SK-N-SH (cell line): ENCODE measurements at regions of chr2 and their contacts with region 1.

Region 1: GRCh38 chr2:29923110-29923721 is 1.8 kb upstream of the ALK start:
- DNase-seq: peak; percentile 71
- H3K4me3 ChIP-seq: no peak overlapping the region; a peak in 1 of 4 replicates
- H3K27ac ChIP-seq: no peak overlapping the region; a peak in 1 of 4 replicates
- H3K4me1 ChIP-seq: peaks cover 0 to 11% of the 10 kb centered on the region in 2 experiments; a peak in 2 of 4 replicates
- H3K27me3 ChIP-seq: peaks cover 38% of the 10 kb centered on the region
- CTCF ChIP-seq: peak; percentile 99
- EP300 ChIP-seq: 0 out of 4 replicates have a peak, but pooled peaks of 1 of the 2 experiments have one; percentile 10
- RAD21 ChIP-seq: peak; percentile 99

Region 2: GRCh38 chr2:28958689-28959088 is 964.5 kb before region 1 on chr2:
- CTCF ChIA-PET with region 1: interaction called, 10 read pairs
- POLR2A ChIA-PET with region 1: interaction called, 6 read pairs
- DNase-seq: peak; percentile 87
- H3K4me3 ChIP-seq: no peak overlapping the region; a peak in 1 of 4 replicates
- H3K27ac ChIP-seq: peak overlapping the region in 1 of 2 experiments; percentile 26; a peak in 1 of 4 replicates
- H3K4me1 ChIP-seq: peaks cover 0 to 10% of the 10 kb centered on the region in 2 experiments; a peak in 1 of 4 replicates
- H3K27me3 ChIP-seq: no peaks in the 10 kb centered on the region
- CTCF ChIP-seq: peak; percentile 79
- EP300 ChIP-seq: 0 out of 4 replicates have a peak, but pooled peaks of 1 of the 2 experiments have one; percentile 18
- RAD21 ChIP-seq: peak; percentile 99

Region 3: DNA sequence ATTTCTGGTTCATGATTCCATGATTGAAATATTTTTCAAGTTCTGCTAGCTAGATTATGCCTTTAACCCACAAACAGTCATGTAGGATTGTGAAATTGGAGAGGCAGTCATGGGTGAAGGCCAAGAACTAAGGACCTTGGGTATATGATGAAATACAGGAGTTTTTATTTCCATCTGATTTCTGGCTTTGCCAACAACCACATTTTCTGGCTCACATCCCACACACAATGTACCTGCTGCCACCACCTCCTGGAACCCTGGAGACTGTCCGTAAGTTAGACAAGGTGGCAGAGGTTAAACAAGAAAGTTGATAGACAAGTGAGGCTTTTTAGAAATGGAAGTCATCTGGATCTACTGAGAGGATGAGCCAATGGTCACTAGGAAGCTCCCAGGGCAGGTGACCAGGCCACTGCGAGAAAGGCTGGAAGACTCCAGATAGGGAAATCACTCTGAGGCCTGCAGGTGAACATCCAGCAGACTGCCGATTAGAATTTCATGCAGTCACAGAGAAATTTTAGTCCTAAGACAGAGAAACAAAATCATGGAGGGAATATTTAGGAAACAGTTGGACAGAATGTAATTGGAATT is 403.8 kb before region 1 on chr2:
- CTCF ChIA-PET with region 1: interaction called, 6 read pairs
- POLR2A ChIA-PET with region 1: interaction called, 18 read pairs
- DNase-seq: no peak
- H3K4me3 ChIP-seq: no peak overlapping the region
- H3K27ac ChIP-seq: peak overlapping the region in 1 of 2 experiments; percentile 100; a peak in 2 of 4 replicates
- H3K4me1 ChIP-seq: peaks cover 9 to 69% of the 10 kb centered on the region in 2 experiments; a peak in 2 of 4 replicates
- H3K27me3 ChIP-seq: no peaks in the 10 kb centered on the region
- CTCF ChIP-seq: no peak
- EP300 ChIP-seq: no peak
- RAD21 ChIP-seq: no peak

Region 4: DNA sequence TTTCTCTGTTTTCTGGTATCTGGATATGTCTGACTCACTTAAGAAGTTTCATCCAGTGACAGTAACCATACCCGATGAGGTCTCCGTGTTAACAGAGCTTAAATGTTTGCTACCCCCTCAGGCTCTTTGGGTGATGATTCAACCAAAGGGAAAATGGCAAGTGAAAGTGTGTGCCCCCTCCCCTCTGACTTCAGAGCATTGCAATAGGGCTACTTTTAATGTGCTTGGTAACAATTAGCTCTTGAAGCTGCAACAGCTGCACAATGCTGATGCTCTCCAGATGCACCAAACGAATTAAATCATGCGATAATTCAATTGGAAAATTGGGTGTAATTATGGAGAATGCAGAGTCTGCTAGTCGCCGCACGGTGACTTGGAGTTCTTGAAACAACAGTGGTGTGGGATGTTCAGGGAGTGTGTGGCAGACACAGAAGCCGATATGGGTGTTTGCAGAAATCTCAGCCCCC is 272.6 kb before region 1 on chr2:
- CTCF ChIA-PET with region 1: interaction called, 19 read pairs
- POLR2A ChIA-PET with region 1: interaction called, 50 read pairs
- DNase-seq: peak; percentile 74
- H3K4me3 ChIP-seq: no peak overlapping the region
- H3K27ac ChIP-seq: peak overlapping the region in 1 of 2 experiments; percentile 99; a peak in 2 of 4 replicates
- H3K4me1 ChIP-seq: peaks cover 0 to 41% of the 10 kb centered on the region in 2 experiments; a peak in 2 of 4 replicates
- H3K27me3 ChIP-seq: no peaks in the 10 kb centered on the region
- CTCF ChIP-seq: no peak
- EP300 ChIP-seq: peak; percentile 59 to 100; a peak in 2 of 4 replicates
- RAD21 ChIP-seq: peak; percentile 49

Region 5: GRCh38 chr2:29950481-29950880 is 27.3 kb after region 1 on chr2:
- CTCF ChIA-PET with region 1: interaction called, 44 read pairs
- POLR2A ChIA-PET with region 1: no interaction called
- DNase-seq: no peak
- H3K4me3 ChIP-seq: no peak overlapping the region
- H3K27ac ChIP-seq: no peak overlapping the region
- H3K4me1 ChIP-seq: peaks cover 0 to 32% of the 10 kb centered on the region in 2 experiments; a peak in 2 of 4 replicates
- H3K27me3 ChIP-seq: no peaks in the 10 kb centered on the region
- CTCF ChIP-seq: no peak
- EP300 ChIP-seq: no peak
- RAD21 ChIP-seq: no peak

Region 6: GRCh38 chr2:30026087-30027055 is 103.2 kb after region 1 on chr2:
- CTCF ChIA-PET with region 1: interaction called, 398 read pairs
- POLR2A ChIA-PET with region 1: interaction called, 66 read pairs
- DNase-seq: peak; percentile 89
- H3K4me3 ChIP-seq: peak overlapping the region; percentile 21 to 30; a peak in 3 of 4 replicates
- H3K27ac ChIP-seq: peak overlapping the region in 1 of 2 experiments; percentile 92; a peak in 2 of 4 replicates
- H3K4me1 ChIP-seq: peaks cover 5 to 57% of the 10 kb centered on the region in 2 experiments; a peak in 3 of 4 replicates
- H3K27me3 ChIP-seq: 0 out of 2 replicates have a peak, but pooled peaks cover 4% of the 10 kb centered on the region
- CTCF ChIP-seq: peak; percentile 83
- EP300 ChIP-seq: peak in 1 of 2 experiments; percentile 89; a peak in 2 of 4 replicates
- RAD21 ChIP-seq: peak; percentile 95

Region 7: DNA sequence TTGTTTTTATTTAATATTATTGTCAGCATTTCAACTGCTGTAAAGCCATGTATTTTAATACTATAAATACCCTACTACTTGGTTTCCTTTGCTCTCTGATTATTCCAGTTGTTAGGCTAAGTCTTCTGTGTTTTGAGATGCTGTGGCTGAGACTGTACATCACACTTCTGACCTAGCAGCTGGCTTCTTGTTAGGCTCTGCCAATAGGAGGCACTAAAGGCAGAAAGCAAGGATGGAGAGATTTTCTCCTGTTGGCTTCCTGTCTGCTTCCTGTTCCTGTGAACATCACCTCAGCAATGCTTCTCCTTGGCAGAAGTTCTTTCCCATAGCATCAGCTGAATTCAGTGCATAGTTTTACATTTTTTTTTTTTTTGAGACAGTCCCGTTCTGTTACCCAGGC is 155.3 kb after region 1 on chr2:
- CTCF ChIA-PET with region 1: interaction called, 209 read pairs
- POLR2A ChIA-PET with region 1: no interaction called
- DNase-seq: no peak
- H3K4me3 ChIP-seq: no peak overlapping the region
- H3K27ac ChIP-seq: no peak overlapping the region
- H3K4me1 ChIP-seq: no peaks in the 10 kb centered on the region
- H3K27me3 ChIP-seq: peaks cover 6% of the 10 kb centered on the region; the same call in 1 of the 2 replicates
- CTCF ChIP-seq: peak; percentile 16; the same call in 1 of the 2 replicates
- EP300 ChIP-seq: no peak
- RAD21 ChIP-seq: no peak